ENCODE measurements at regions of chr2 and their contacts with region 1.

Region 1: GRCh38 chr2:60818272-60818671 is 62.2 kb downstream of the PAPOLG start:
- DNase-seq: no peak
- CTCF ChIP-seq: peak; percentile 17

Region 2: DNA sequence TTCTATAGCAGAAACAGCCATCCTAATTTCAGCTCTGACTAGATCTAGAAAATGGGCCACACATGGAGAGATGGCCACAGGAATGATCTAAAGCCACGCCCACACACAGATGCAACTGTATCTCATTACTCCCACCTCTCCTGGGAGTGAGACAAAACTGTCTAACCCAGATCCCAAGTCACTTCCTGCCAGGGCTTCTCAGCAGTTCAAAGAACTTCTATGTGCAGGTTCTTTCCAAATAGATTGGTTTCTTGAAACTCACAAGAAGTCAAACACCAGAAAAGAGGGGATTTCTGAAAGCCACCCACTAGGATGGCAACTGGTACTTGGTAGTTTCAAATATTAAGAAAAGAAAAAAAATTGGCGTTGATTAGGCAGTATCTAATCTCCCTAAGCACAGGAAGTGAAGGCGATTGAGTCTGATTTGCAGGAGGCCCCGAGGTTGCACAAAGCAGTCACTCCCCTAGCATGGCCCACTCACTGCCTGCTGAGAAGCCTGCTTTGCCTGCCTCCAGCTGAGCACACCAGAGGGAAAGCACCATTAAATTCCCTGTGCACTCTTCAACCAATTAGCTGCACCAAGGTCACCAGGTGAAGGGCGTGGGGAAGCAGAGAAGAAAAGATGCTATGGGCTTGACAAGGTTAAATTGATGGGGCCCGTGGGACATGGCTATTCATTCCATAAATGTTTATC is 11.1 kb before region 1 on chr2:
- CTCF ChIA-PET with region 1: interaction called, 17 read pairs
- POLR2A ChIA-PET with region 1: no interaction called
- DNase-seq: peak; percentile 66
- CTCF ChIP-seq: no peak

Measured in GM10248 (cell line).